AG04450 (cell line): ENCODE measurements at regions of chr1 and their contacts with region 1.

Region 1: DNA sequence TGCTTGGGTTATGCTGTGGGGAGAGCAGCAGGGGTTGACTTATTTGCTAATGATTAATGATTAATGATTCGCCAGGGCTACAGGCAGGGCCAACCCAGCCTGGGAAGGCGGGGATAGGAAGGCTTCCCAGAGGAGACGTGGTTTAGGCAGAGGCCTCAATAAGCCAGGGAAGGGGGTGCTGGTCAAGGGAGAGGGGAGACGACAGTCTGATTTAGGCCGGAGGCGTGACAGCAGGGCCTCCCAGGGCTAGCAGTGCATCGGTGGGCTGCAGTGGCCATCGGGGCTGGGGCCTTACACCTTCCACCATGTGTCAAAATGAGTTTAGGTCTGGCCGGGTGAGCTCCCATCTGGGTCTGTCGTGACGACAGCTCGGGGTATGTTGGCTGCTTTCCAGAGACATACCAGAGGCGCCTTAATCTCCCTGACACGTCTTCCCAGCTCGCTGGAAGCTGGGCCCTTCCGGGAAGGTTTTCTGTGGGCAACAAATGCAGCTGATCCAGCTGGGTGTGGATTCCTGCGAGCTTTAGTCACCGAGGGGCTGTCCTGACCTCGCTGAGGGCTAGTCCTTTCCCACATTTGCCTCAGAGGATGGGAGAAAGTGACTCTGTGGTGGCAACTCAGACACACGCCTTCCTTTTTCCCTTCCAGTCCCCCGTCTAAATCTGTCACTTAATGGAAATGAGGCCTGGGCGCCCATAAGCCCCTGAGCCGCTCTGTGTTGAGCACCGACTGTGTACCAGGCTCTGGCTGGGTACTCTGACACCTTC is 3.7 kb upstream of the SLC1A7 start:
- DNase-seq: peak; percentile 99
- H3K4me3 ChIP-seq: 0 out of 2 replicates have a peak overlapping the region, but pooled peaks have one; percentile 23
- H3K27ac ChIP-seq: peak overlapping the region; percentile 100
- H3K27me3 ChIP-seq: no peaks in the 10 kb centered on the region
- CTCF ChIP-seq: no peak

Region 2: GRCh38 chr1:53107570-53108322 is 38.4 kb before region 1 on chr1:
- CTCF ChIA-PET with region 1: no interaction called
- POLR2A ChIA-PET with region 1: interaction called, 28 read pairs
- DNase-seq: peak; percentile 84
- H3K4me3 ChIP-seq: no peak overlapping the region
- H3K27ac ChIP-seq: peak overlapping the region; percentile 87
- H3K27me3 ChIP-seq: no peaks in the 10 kb centered on the region
- CTCF ChIP-seq: no peak

Region 3: DNA sequence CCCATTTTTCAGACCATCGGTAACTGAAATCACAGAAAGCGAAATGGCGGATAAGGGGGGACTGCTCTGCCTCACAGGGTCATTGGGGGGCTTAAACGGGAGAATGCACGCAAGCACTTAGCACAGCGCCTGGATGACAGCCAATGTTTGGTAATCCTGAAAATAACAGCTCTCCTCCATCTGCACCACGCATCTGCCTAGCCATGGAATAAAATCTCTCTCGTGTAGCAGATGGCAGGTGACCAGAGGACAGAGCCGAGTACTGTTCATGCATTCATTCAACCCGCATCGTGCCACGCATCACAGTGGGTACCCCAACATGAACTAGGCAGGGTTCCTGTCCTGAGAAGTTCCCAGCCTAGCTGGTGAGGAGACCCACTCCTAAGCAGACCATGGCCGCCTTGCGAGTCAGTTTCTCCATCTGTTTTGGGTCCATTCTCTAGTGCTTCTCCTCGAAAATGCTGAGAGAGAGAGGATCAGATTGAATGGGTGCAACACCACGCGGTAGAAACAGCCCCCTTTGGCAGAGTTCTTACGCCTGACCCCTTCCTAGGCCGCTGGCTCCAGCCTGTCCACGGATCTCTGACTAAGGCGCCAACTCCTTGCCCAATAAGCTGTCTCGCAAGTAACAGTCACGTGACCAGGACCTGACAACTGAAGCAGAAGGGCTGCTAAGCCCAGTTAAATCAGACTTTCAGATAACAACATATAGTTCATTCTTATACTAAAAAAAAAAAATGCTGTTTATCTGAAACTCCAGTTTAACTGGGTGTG is 11.0 kb before region 1 on chr1:
- CTCF ChIA-PET with region 1: no interaction called
- POLR2A ChIA-PET with region 1: interaction called, 15 read pairs
- DNase-seq: peak; percentile 74
- H3K4me3 ChIP-seq: no peak overlapping the region
- H3K27ac ChIP-seq: peak overlapping the region; percentile 96
- H3K27me3 ChIP-seq: no peaks in the 10 kb centered on the region
- CTCF ChIP-seq: no peak